ENCODE measurements at regions of chr2 and their contacts with region 1.

Region 1: GRCh38 chr2:216114714-216115557 is 5.8 kb downstream of the XRCC5 start:
- DNase-seq: peak; percentile 96 to 98 (median 96)
- H3K4me3 ChIP-seq: peak overlapping the region; percentile 38 to 60
- H3K4me3 Mint-ChIP-seq: peak overlapping the region; percentile 89 to 98 (median 94)
- H3K27ac ChIP-seq: peak overlapping the region; percentile 70
- H3K27ac Mint-ChIP-seq: peak overlapping the region; percentile 96 to 100 (median 98)
- H3K4me1 ChIP-seq: peaks cover 96% of the 10 kb centered on the region
- H3K4me1 Mint-ChIP-seq: peaks cover 68 to 95% (median 81%) of the 10 kb centered on the region in 4 donors
- H3K27me3 ChIP-seq: no peaks in the 10 kb centered on the region
- H3K27me3 Mint-ChIP-seq: no peaks in the 10 kb centered on the region

Region 2: DNA sequence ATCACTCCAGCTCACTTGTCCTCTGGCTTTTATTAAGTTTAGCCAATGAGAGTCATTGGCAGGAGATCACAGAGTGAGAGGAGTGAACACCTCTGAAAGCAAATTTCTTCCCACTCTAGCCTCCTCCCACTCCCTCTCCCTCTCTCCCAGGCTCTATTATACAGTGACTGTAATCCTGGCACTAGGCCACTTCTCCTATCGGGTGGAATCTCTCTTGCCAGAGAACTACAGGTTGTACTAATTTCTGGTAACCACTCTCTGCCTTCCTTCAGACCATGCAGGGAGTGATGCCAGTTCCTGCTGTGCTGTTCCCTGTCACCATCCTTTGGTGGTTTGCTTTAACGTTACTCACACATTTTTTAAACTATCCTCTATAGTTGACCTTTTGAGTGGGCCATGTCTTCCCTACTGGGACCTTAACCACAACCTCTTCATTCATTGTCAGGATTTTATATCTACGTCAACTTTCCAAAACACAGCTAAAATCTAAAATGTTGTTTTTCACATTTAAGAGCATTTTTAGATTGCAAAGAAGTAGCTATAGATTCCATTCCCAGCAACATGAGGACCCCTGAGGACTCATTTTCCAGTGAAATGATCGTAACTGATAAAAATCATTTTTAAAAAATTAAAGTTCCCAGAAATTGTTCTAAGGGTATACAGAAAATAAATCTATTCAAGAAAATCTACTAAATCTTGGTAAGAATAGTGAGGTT is 318.6 kb before region 1 on chr2:
- CTCF ChIA-PET with region 1: no interaction called
- POLR2A ChIA-PET with region 1: no interaction called
- intact Hi-C with region 1: no loop called
- DNase-seq: no peak
- H3K4me3 ChIP-seq: no peak overlapping the region
- H3K4me3 Mint-ChIP-seq: no peak overlapping the region
- H3K27ac ChIP-seq: no peak overlapping the region
- H3K27ac Mint-ChIP-seq: no peak overlapping the region
- H3K4me1 ChIP-seq: no peaks in the 10 kb centered on the region
- H3K4me1 Mint-ChIP-seq: peaks cover 4 to 9% (median 6%) of the 10 kb centered on the region in 4 donors
- H3K27me3 ChIP-seq: no peaks in the 10 kb centered on the region
- H3K27me3 Mint-ChIP-seq: peaks cover 0 to 2% of the 10 kb centered on the region in 2 donors

Region 3: GRCh38 chr2:216057688-216058193 is 57.2 kb before region 1 on chr2:
- CTCF ChIA-PET with region 1: interaction called, 22 read pairs
- POLR2A ChIA-PET with region 1: interaction called, 35 read pairs
- intact Hi-C with region 1: loop called (anchors 2 kb)
- DNase-seq: peak; percentile 62 to 73 (median 65)
- H3K4me3 ChIP-seq: peak overlapping the region in 1 of 2 donors; percentile 14
- H3K4me3 Mint-ChIP-seq: peak overlapping the region; percentile 75 to 93 (median 85)
- H3K27ac ChIP-seq: peak overlapping the region; percentile 61
- H3K27ac Mint-ChIP-seq: peak overlapping the region; percentile 98 to 99 (median 99)
- H3K4me1 ChIP-seq: peaks cover 23% of the 10 kb centered on the region
- H3K4me1 Mint-ChIP-seq: peaks cover 21 to 41% (median 27%) of the 10 kb centered on the region in 4 donors
- H3K27me3 ChIP-seq: no peaks in the 10 kb centered on the region
- H3K27me3 Mint-ChIP-seq: no peaks in the 10 kb centered on the region

Region 4: GRCh38 chr2:216081487-216082116 is 33.3 kb before region 1 on chr2 and contains the starts of genes PECR and TMEM169:
- CTCF ChIA-PET with region 1: interaction called, 64 read pairs
- POLR2A ChIA-PET with region 1: interaction called, 61 read pairs
- intact Hi-C with region 1: loop called (anchors 1 kb)
- DNase-seq: peak; percentile 69 to 79 (median 74)
- H3K4me3 ChIP-seq: peak within 1 kb of the TSS; percentile 74 to 87
- H3K4me3 Mint-ChIP-seq: peak within 1 kb of the TSS; percentile 83 to 97 (median 94)
- H3K27ac ChIP-seq: peak within 1 kb of the TSS; percentile 65
- H3K27ac Mint-ChIP-seq: peak within 1 kb of the TSS; percentile 78 to 98 (median 92)
- H3K4me1 ChIP-seq: peaks cover 67% of the 10 kb centered on the region
- H3K4me1 Mint-ChIP-seq: peaks cover 41 to 69% (median 55%) of the 10 kb centered on the region in 4 donors
- H3K27me3 ChIP-seq: no peaks in the 10 kb centered on the region
- H3K27me3 Mint-ChIP-seq: no peaks in the 10 kb centered on the region
- total RNA-seq, gene PECR: 16.8 to 20.6 TPM
- total RNA-seq, gene TMEM169: 3.6 to 5.1 TPM

Region 5: GRCh38 chr2:216139884-216140283 is 24.9 kb after region 1 on chr2:
- CTCF ChIA-PET with region 1: interaction called, 11 read pairs
- POLR2A ChIA-PET with region 1: no interaction called
- intact Hi-C with region 1: no loop called
- DNase-seq: peak; percentile 30 to 58 (median 39)
- H3K4me3 ChIP-seq: no peak overlapping the region
- H3K4me3 Mint-ChIP-seq: no peak overlapping the region
- H3K27ac ChIP-seq: no peak overlapping the region
- H3K27ac Mint-ChIP-seq: peak overlapping the region in 3 of 7 donors; percentile 56 to 73 (median 57)
- H3K4me1 ChIP-seq: no peaks in the 10 kb centered on the region
- H3K4me1 Mint-ChIP-seq: peaks cover 0 to 17% (median 14%) of the 10 kb centered on the region in 4 donors
- H3K27me3 ChIP-seq: no peaks in the 10 kb centered on the region
- H3K27me3 Mint-ChIP-seq: no peaks in the 10 kb centered on the region

Region 6: DNA sequence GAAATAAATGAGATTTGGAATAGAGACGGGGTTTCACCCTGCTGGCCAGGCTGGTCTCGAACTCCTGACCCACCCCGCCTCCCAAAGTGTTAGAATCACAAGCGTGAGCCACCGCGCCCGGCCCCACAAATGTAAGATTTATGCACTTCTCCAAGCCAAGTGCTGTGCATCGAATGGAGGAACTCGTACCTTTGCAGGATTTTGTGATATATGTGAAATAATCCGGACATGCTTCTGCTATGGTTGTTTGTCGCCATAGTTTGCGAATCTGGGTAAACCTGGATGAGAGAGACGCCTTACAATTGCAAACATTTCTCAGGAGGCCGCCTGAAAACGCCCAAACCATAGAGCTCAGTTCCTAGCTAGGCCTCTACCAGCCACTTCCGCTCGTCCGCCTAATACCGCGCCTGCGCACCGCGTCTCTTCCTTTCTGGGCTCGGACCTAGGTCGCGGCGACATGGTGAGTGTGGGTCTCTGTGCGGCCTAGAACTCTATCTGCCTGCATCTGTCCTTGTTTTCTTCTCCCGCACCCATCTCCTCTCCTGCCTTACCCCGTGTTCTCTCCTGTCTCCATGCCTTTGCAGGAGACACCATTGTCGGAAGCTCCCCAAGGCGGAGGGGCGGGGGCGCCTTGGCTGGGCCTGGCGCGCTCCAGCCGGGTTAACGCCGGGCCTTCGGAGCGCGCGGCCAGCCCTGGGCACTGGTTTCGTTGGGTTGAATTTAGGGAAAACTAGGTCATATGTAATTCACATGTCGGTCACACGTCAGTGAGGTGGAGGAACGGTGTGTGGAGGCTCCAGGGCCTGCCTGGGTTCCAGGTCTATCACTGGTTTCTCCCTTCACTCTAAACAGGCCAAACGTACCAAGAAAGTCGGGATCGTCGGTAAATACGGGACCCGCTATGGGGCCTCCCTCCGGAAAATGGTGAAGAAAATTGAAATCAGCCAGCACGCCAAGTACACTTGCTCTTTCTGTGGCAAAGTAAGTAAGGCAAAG is 383.8 kb after region 1 on chr2 and contains the start of gene RPL37A:
- CTCF ChIA-PET with region 1: no interaction called
- POLR2A ChIA-PET with region 1: no interaction called
- intact Hi-C with region 1: loop called (anchors 5 kb)
- DNase-seq: peak; percentile 88 to 90 (median 90)
- H3K4me3 ChIP-seq: peak within 1 kb of the TSS; percentile 88 to 98
- H3K4me3 Mint-ChIP-seq: peak within 1 kb of the TSS; percentile 94 to 100 (median 99)
- H3K27ac ChIP-seq: peak within 1 kb of the TSS; percentile 88
- H3K27ac Mint-ChIP-seq: peak within 1 kb of the TSS; percentile 93 to 99 (median 97)
- H3K4me1 ChIP-seq: peaks cover 50% of the 10 kb centered on the region
- H3K4me1 Mint-ChIP-seq: peaks cover 36 to 58% (median 42%) of the 10 kb centered on the region in 4 donors
- H3K27me3 ChIP-seq: no peaks in the 10 kb centered on the region
- H3K27me3 Mint-ChIP-seq: no peaks in the 10 kb centered on the region
- total RNA-seq, gene RPL37A: 3,034 to 3,213 TPM